ENCODE measurements at regions of chr1 and their contacts with region 1.

Region 1: GRCh38 chr1:155063550-155064110 is at the start of gene EFNA4:
- DNase-seq: peak; percentile 89 to 90
- H3K4me3 ChIP-seq: peak within 1 kb of the TSS; percentile 75 to 92 (median 81)
- H3K27ac ChIP-seq: peak within 1 kb of the TSS; percentile 40 to 76 (median 67)
- H3K4me1 ChIP-seq: peaks cover 26 to 31% of the 10 kb centered on the region in 2 donors
- H3K27me3 ChIP-seq: no peaks in the 10 kb centered on the region
- CTCF ChIP-seq: no peak
- POLR2A ChIP-seq: peak in 1 of 2 donors; percentile 77
- total RNA-seq, gene EFNA4: 7.5 to 13.1 (median 9.9) TPM

Region 2: GRCh38 chr1:154559466-154560088 is 504.1 kb before region 1 on chr1:
- intact Hi-C with region 1: loop called (anchors 10 kb)
- DNase-seq: peak; percentile 87 to 89
- H3K4me3 ChIP-seq: peak overlapping the region in 2 of 3 donors; percentile 33 to 38
- H3K27ac ChIP-seq: peak overlapping the region; percentile 76 to 89 (median 83)
- H3K4me1 ChIP-seq: peaks cover 20 to 28% of the 10 kb centered on the region in 2 donors
- H3K27me3 ChIP-seq: no peaks in the 10 kb centered on the region
- CTCF ChIP-seq: peak; percentile 84 to 97 (median 91)
- POLR2A ChIP-seq: no peak

Region 3: DNA sequence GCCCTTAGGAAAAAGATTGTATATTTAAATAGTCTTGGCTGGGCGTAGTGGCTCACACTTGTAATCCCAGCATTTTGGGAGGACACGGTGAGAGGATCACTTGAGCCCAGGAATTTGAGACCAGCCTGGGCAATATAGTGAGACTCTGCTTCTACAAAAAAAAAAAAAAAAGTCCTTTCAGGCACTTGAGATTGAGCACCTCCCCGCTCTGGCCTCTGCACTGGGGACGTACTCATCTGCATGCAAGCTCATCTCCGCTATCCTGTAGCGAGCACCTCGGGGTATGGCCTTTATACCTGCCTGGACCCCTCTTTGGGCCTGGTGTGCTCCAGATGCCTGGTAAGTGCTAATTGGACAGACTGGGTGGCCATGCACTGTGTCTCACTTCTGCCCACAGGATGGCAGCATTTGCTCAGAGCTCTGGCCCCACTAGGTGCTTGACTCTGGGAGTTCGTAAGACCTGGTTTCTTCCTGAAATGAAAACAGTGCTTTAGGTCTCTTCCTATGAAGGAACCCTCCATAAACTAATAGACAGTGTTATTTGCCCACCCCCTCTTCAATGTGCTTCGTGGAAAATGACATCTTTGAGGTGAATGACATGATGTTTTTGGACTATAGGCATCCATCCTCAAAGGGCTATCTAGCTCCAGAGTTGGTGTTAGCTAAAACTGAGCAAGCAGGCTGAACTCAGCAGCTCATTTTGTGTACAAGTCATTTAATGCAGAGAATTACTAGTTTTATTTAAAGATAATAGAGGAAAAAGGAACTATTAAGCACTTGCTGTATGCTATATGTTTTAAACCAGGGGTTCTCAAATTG is 394.0 kb before region 1 on chr1:
- intact Hi-C with region 1: loop called (anchors 10 kb)
- DNase-seq: peak; percentile 79 to 82
- H3K4me3 ChIP-seq: no peak overlapping the region
- H3K27ac ChIP-seq: no peak overlapping the region
- H3K4me1 ChIP-seq: no peaks in the 10 kb centered on the region
- H3K27me3 ChIP-seq: no peaks in the 10 kb centered on the region
- CTCF ChIP-seq: peak; percentile 17 to 92 (median 79)
- POLR2A ChIP-seq: no peak

Region 4: GRCh38 chr1:155084722-155085503 is 21.3 kb after region 1 on chr1:
- intact Hi-C with region 1: loop called (anchors 2 kb)
- DNase-seq: peak; percentile 95 to 96
- H3K4me3 ChIP-seq: peak overlapping the region; percentile 51 to 83 (median 58)
- H3K27ac ChIP-seq: peak overlapping the region; percentile 80 to 87 (median 81)
- H3K4me1 ChIP-seq: peaks cover 38 to 58% of the 10 kb centered on the region in 2 donors
- H3K27me3 ChIP-seq: peaks cover 38% of the 10 kb centered on the region
- CTCF ChIP-seq: peak; percentile 90 to 98 (median 96)
- POLR2A ChIP-seq: peak in 1 of 2 donors; percentile 58